Activated CD4-positive, alpha-beta memory T cell treated with anti-CD3 and anti-CD28 coated beads for 36 hours (primary cell): ENCODE measurements at regions of chr3 and their contacts with region 1.

Region 1: GRCh38 chr3:114128231-114128630 is 50.6 kb downstream of the DRD3 start:
- DNase-seq: no peak
- H3K4me3 Mint-ChIP-seq: no peak overlapping the region
- H3K27ac Mint-ChIP-seq: peak overlapping the region; percentile 35
- H3K4me1 Mint-ChIP-seq: peaks cover 7% of the 10 kb centered on the region
- H3K27me3 Mint-ChIP-seq: peaks cover 2% of the 10 kb centered on the region

Region 2: GRCh38 chr3:113873814-113874526 is 254.3 kb before region 1 on chr3:
- CTCF ChIA-PET with region 1: no interaction called
- POLR2A ChIA-PET with region 1: no interaction called
- intact Hi-C with region 1: no loop called
- DNase-seq: no peak
- H3K4me3 Mint-ChIP-seq: no peak overlapping the region
- H3K27ac Mint-ChIP-seq: no peak overlapping the region
- H3K4me1 Mint-ChIP-seq: no peaks in the 10 kb centered on the region
- H3K27me3 Mint-ChIP-seq: peaks cover 6% of the 10 kb centered on the region

Region 3: DNA sequence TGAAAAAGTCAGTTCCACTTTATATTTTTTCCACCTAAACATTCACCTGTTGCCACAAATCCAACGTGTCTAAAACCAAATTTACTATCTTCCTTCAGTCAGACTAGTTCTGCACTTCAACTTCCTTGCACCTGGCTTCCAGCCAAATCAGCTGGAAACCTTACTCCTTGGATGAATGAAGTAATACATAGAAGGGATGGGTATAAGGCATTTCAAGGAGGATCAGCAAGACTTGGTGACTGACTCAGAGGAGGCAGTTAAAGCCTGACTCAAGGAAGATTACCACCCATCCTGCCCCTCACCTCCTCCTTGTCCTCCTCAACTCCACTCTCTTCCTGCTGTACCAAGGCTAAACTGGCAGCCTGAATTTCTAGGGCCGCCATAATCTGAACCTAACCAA is 34.6 kb before region 1 on chr3:
- CTCF ChIA-PET with region 1: no interaction called
- POLR2A ChIA-PET with region 1: no interaction called
- intact Hi-C with region 1: no loop called
- DNase-seq: no peak
- H3K4me3 Mint-ChIP-seq: no peak overlapping the region
- H3K27ac Mint-ChIP-seq: no peak overlapping the region
- H3K4me1 Mint-ChIP-seq: no peaks in the 10 kb centered on the region
- H3K27me3 Mint-ChIP-seq: no peaks in the 10 kb centered on the region

Region 4: DNA sequence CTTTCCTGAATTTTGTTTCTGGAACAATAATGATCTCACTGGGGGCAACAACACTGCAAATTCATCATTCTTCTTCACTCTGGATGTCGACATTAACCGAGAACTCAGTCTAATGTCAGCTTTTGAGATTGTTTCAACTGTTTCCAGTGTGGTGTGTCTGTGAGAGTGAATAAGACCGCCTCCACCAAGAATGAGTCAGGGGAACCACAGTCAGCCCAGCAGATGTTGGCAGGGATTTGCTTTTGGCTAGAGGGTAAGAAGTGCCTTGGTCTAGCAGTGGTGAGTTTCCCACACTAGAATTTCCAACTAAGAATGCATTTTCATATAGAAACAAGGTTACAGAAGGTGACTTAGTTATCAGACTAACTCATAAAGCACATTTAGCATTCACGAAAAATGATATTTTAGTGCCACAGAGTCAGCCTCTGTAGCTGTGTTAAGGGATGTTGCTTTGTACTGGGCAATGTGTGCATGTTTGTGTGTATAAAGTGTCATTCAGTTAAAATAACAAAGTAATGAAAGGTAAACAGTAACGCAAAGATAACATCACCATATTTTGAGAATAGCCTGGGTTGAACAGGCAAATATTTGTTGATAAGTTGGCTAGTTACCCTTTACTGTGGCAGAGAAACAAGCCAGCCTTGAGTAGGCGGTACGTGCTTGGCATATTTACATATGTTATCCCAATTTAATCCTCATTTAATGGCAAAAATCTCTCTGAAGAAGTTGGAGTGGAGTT is 16.8 kb after region 1 on chr3:
- CTCF ChIA-PET with region 1: no interaction called
- POLR2A ChIA-PET with region 1: no interaction called
- intact Hi-C with region 1: loop called (anchors 2 kb)
- DNase-seq: peak; percentile 72
- H3K4me3 Mint-ChIP-seq: no peak overlapping the region
- H3K27ac Mint-ChIP-seq: no peak overlapping the region
- H3K4me1 Mint-ChIP-seq: peaks cover 11% of the 10 kb centered on the region
- H3K27me3 Mint-ChIP-seq: no peaks in the 10 kb centered on the region

Region 5: GRCh38 chr3:114155370-114155821 is 27.2 kb after region 1 on chr3:
- CTCF ChIA-PET with region 1: no interaction called
- POLR2A ChIA-PET with region 1: no interaction called
- intact Hi-C with region 1: no loop called
- DNase-seq: peak; percentile 52
- H3K4me3 Mint-ChIP-seq: no peak overlapping the region
- H3K27ac Mint-ChIP-seq: no peak overlapping the region
- H3K4me1 Mint-ChIP-seq: peaks cover 8% of the 10 kb centered on the region
- H3K27me3 Mint-ChIP-seq: no peaks in the 10 kb centered on the region